ENCODE measurements at regions of chr17 and their contacts with region 1.

Region 1: GRCh38 chr17:77054936-77055335 is 85.8 kb upstream of the SEC14L1 start:
- DNase-seq: no peak
- H3K4me3 Mint-ChIP-seq: no peak overlapping the region
- H3K27ac Mint-ChIP-seq: no peak overlapping the region
- H3K4me1 Mint-ChIP-seq: no peaks in the 10 kb centered on the region
- H3K27me3 Mint-ChIP-seq: no peaks in the 10 kb centered on the region

Region 2: DNA sequence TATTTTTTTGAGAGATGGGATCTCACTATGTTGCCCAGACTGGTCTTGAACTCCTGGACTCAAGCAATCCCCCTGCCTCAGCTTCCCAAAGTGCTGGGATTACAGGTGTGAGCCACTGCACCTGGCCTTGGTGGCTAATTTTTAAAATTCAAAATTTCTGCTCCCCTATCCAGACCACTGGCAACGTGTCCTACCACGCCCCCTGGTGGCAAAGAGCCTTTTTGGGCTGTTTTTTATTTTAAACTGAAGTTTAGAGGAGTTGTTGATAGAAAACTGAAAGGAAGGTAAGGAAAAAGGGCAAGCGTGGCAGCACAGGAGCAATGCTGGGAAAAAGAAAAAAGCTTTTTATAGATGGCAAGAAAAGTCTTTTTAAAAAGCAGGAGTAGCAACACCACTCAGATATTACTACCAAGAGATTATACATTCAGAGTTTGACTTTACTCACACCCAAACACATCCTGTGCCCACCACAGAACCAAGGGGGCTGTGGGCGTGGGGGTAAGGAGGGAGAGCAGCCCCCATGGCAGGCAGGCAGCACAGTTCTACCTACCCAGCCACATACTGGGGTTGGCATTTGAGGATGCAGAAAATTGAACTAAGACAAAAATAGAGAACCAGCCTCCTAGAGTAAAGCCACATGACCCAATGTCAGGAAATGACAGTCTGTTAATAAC is 340.0 kb before region 1 on chr17:
- CTCF ChIA-PET with region 1: no interaction called
- intact Hi-C with region 1: loop called (anchors 1 kb)
- DNase-seq: peak; percentile 90
- H3K4me3 Mint-ChIP-seq: no peak overlapping the region
- H3K27ac Mint-ChIP-seq: peak overlapping the region; percentile 82
- H3K4me1 Mint-ChIP-seq: peaks cover 32% of the 10 kb centered on the region
- H3K27me3 Mint-ChIP-seq: no peaks in the 10 kb centered on the region

Region 3: GRCh38 chr17:76816590-76817135 is 238.3 kb before region 1 on chr17:
- CTCF ChIA-PET with region 1: interaction called, 9 read pairs
- intact Hi-C with region 1: loop called (anchors 1 kb)
- DNase-seq: peak; percentile 78
- H3K4me3 Mint-ChIP-seq: no peak overlapping the region
- H3K27ac Mint-ChIP-seq: no peak overlapping the region
- H3K4me1 Mint-ChIP-seq: peaks cover 7% of the 10 kb centered on the region
- H3K27me3 Mint-ChIP-seq: no peaks in the 10 kb centered on the region

Region 4: GRCh38 chr17:76868176-76868668 is 186.7 kb before region 1 on chr17 and contains the start of gene MGAT5B:
- CTCF ChIA-PET with region 1: interaction called, 17 read pairs
- intact Hi-C with region 1: loop called (anchors 1 kb)
- DNase-seq: peak; percentile 73
- H3K4me3 Mint-ChIP-seq: peak within 1 kb of the TSS; percentile 59
- H3K27ac Mint-ChIP-seq: no peak within 1 kb of the TSS
- H3K4me1 Mint-ChIP-seq: peaks cover 7% of the 10 kb centered on the region
- H3K27me3 Mint-ChIP-seq: peaks cover 21% of the 10 kb centered on the region
- total RNA-seq, gene MGAT5B: 0.19 TPM in 1 of 2 experiments, not detected in the other

Region 5: DNA sequence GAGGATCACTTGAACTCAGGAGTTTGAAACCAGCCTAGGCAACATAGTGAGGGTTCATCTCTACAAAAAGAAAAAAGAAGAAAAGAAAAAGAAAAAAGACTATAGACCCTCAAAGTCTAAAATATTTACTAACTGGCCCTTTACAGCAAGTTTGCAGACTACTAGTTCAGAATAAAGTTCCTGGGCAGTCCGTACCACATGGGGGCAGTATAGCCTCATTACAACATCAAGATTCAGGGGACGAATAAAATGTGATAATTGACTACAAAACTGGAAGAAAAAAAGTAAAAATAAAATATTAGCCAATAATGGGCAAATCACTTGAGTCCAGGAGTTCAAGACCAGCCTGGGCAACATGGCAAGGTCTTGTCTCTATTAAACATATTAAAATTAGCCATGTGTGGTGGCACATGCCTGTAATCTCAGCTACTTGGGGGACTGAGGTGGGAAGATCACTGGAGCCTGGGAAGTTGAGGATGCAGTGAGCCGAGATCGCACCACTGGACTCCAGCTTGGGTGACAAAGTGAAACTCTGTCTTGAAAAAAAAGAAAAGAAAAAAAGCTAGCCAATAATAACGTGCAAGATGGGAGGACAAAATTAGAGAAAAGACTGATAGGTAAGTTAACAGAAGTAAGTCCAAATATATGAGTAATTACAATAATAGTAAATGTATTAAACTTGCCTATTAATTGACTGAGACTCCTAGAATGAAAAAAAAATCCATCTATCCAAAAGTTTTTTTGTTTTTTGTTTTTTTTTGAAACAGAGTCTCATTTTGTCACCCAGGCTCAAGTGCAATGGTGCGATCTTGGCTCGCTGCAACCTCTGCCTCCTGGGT is 43.5 kb before region 1 on chr17:
- CTCF ChIA-PET with region 1: interaction called, 10 read pairs
- intact Hi-C with region 1: loop called (anchors 1 kb)
- DNase-seq: peak; percentile 79
- H3K4me3 Mint-ChIP-seq: no peak overlapping the region
- H3K27ac Mint-ChIP-seq: no peak overlapping the region
- H3K4me1 Mint-ChIP-seq: no peaks in the 10 kb centered on the region
- H3K27me3 Mint-ChIP-seq: no peaks in the 10 kb centered on the region

Region 6: GRCh38 chr17:77068915-77069314 is 14.0 kb after region 1 on chr17:
- CTCF ChIA-PET with region 1: interaction called, 31 read pairs
- intact Hi-C with region 1: no loop called
- DNase-seq: no peak
- H3K4me3 Mint-ChIP-seq: no peak overlapping the region
- H3K27ac Mint-ChIP-seq: no peak overlapping the region
- H3K4me1 Mint-ChIP-seq: peaks cover 1% of the 10 kb centered on the region
- H3K27me3 Mint-ChIP-seq: peaks cover 20% of the 10 kb centered on the region